CD4-positive, alpha-beta T cell (primary cell): ENCODE measurements at regions of chrX and their contacts with region 1.

Region 1: DNA sequence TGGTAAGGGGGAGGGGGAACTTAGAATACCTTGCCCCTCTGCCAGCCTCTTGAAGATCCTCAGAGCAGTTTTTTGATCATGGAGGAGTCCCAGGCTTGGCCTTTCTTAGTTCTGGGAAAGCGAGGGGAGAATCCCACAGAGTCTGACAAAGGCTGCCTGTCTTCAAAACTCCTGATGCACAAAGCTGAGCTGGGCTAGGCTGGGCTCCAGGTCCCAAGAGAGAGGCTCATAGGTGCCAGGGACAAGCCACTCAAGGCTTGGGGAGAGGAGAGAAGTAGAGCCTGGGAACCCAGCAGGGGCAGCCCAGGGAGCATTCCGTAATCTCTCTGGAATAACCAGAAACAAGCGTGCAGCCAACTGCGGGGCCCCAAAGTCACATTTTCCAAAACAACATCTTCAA is 37.0 kb upstream of the MTM1 start:
- DNase-seq: no peak
- ATAC-seq: no peak
- H3K4me3 ChIP-seq: no peak overlapping the region
- H3K4me3 Mint-ChIP-seq: no peak overlapping the region
- H3K27ac ChIP-seq: no peak overlapping the region
- H3K27ac Mint-ChIP-seq: no peak overlapping the region
- H3K4me1 ChIP-seq: no peaks in the 10 kb centered on the region
- H3K4me1 Mint-ChIP-seq: no peaks in the 10 kb centered on the region
- H3K27me3 ChIP-seq: no peaks in the 10 kb centered on the region
- H3K27me3 Mint-ChIP-seq: no peaks in the 10 kb centered on the region
- CTCF ChIP-seq: no peak

Region 2: DNA sequence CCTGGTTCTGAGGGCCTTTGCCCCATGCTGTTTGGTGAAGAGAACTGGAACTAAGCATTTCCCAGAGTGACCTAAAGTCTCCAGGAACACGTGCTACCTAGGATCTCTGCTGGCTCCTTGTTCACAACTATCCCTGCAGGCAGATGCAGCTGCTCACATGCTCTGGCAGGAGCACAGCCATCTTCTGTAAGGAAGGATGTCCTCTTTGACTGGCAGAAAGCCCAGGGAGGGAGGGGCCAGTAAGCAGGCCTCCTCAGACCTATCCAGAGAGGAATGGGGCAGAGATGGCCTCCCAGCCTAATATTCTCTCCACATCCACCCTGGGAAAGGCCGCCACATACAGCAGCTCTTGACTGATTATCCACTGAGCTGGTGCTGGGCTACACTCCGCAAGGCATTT is 450.4 kb before region 1 on chrX:
- CTCF ChIA-PET with region 1: no interaction called
- POLR2A ChIA-PET with region 1: no interaction called
- intact Hi-C with region 1: no loop called
- DNase-seq: no peak
- ATAC-seq: no peak
- H3K4me3 ChIP-seq: no peak overlapping the region
- H3K4me3 Mint-ChIP-seq: no peak overlapping the region
- H3K27ac ChIP-seq: no peak overlapping the region
- H3K27ac Mint-ChIP-seq: no peak overlapping the region
- H3K4me1 ChIP-seq: no peaks in the 10 kb centered on the region
- H3K4me1 Mint-ChIP-seq: no peaks in the 10 kb centered on the region
- H3K27me3 ChIP-seq: no peaks in the 10 kb centered on the region
- H3K27me3 Mint-ChIP-seq: no peaks in the 10 kb centered on the region
- CTCF ChIP-seq: no peak

Region 3: DNA sequence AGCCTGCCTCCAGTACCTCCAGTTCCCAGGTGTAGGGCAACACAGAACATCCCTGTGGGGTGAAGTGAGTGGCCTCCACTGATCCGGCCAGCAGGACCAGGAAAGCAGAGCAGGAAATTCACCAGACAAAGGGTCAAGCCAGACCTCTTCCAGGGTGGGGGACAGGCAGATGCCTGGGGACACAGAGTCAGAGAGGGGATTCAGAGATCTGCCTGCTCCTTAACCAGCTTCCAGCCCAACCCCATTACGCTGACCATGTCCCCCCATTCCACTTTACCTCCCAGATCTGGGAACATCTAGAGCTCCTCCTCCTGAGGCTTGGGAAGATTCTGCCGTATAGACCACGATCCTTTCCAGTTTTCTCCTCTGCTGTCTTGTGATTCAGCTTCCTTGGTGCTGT is 36.0 kb before region 1 on chrX:
- CTCF ChIA-PET with region 1: no interaction called
- POLR2A ChIA-PET with region 1: no interaction called
- intact Hi-C with region 1: loop called in 1 of 2 experiments (anchors 2 kb)
- DNase-seq: no peak
- ATAC-seq: no peak
- H3K4me3 ChIP-seq: no peak overlapping the region
- H3K4me3 Mint-ChIP-seq: no peak overlapping the region
- H3K27ac ChIP-seq: no peak overlapping the region
- H3K27ac Mint-ChIP-seq: no peak overlapping the region
- H3K4me1 ChIP-seq: no peaks in the 10 kb centered on the region
- H3K4me1 Mint-ChIP-seq: no peaks in the 10 kb centered on the region
- H3K27me3 ChIP-seq: no peaks in the 10 kb centered on the region
- H3K27me3 Mint-ChIP-seq: no peaks in the 10 kb centered on the region
- CTCF ChIP-seq: no peak